BJ (cell line): ENCODE measurements at regions of chr13 and their contacts with region 1.

Region 1: DNA sequence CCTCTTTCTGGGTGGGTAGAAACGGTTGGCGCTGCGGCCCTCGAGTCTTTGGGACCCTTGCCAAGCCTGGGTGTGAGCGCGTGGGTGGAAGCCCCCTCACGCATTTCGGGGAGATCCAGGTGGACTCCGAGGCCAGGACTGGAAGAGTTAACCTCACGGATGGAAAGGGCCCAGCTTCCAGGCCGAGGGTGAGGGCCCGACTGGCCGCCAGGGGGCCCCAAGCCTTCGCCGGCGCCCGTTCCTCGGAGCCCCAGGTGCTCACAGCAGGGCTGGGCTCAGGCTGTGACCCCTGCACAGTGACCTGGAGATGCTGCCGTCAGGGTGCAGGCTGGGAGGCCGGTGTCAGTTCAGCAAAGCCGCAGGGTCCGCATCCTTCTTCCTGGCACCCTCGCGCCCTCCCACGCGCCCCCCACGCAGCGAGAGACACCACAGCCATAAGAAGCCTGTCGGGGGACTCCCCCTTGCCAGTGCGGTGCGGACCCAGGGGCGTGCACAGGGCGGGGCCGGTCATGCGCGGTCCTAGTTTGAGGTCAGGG is 34.2 kb upstream of the TMEM255B start:
- DNase-seq: no peak
- H3K4me3 ChIP-seq: peak overlapping the region; percentile 31
- H3K27me3 ChIP-seq: peaks cover 13% of the 10 kb centered on the region
- CTCF ChIP-seq: peak; percentile 92

Region 2: GRCh38 chr13:112783135-112783977 is 941.5 kb before region 1 on chr13:
- CTCF ChIA-PET with region 1: no interaction called
- POLR2A ChIA-PET with region 1: no interaction called
- DNase-seq: no peak
- H3K4me3 ChIP-seq: no peak overlapping the region
- H3K27me3 ChIP-seq: no peaks in the 10 kb centered on the region
- CTCF ChIP-seq: no peak

Region 3: DNA sequence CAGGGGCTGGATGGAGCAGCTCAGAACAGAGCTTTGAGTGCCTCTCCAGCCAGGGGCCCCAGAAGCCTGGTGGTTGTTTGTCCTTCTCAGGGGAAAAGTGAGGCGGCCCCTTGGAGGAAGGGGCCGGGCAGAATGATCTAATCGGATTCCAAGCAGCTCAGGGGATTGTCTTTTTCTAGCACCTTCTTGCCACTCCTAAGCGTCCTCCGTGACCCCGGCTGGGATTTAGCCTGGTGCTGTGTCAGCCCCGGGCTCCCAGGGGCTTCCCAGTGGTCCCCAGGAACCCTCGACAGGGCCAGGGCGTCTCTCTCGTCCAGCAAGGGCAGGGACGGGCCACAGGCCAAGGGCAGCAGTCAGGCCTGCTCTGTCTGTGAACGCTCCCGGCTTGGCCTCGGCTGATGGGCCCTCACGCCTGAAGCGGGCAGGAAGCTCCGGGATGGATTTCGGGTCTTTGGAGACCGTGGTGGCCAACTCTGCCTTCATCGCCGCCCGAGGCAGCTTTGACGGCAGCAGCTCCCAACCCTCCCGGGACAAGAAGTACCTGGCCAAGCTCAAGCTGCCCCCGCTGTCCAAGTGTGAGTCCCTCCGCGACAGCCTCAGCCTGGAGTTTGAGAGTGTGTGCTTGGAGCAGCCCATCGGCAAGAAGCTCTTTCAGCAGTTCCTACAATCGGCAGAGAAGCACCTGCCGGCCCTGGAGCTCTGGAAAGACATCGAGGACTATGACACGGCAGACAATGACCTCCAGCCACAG is 57.7 kb before region 1 on chr13 and contains the start of gene GRK1:
- CTCF ChIA-PET with region 1: interaction called, 15 read pairs
- POLR2A ChIA-PET with region 1: no interaction called
- DNase-seq: no peak
- H3K4me3 ChIP-seq: no peak within 1 kb of the TSS
- H3K27me3 ChIP-seq: peaks cover 3% of the 10 kb centered on the region; the same call in 1 of the 2 replicates
- CTCF ChIP-seq: no peak
- polyA plus RNA-seq, gene GRK1: 0.02 TPM in 1 of 2 replicates, not detected in the other